ENCODE measurements at regions of chr10 and their contacts with region 1.

Region 1: DNA sequence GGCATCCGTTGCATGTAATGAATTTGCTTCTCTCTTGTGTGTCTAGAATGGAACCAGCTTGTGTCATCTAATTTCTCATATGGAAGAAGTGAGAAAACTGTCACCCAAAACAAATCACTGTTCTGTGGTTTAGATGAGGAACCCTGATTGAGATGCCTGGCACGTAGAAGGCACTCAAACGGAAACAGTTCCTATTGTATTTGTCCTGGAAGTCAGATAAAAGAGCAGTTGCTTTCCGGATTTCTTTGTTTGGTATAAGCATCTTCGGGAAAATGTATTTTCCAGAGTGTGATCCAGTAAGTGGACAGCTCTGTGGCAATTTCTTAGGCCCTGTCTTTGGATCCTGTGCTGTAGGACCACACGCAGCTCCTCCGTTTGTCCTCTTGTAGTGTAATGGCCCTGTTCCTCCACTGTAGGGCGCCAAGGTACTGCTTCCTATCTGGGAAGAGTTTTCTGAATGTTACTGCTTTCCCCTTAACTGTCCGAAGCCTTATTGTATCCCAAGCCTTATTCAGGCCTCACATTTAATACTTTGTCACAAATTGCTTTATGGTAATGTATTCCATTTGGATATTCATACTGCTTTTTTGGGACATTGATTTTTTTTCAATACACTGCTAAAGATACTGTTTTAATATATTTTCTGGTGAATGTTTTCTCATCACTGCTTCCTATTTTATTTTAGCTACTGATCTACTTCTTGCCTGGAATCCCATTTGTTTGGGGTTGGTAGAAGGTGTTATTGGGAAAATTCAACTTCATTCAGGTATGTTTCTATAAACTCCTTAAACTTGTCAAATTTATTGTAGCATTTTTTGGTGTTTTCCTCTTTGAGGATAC is 24.8 kb downstream of the INPP5F start:
- DNase-seq: peak; percentile 81
- ATAC-seq: peak; percentile 97
- H3K4me3 ChIP-seq: peak overlapping the region in 1 of 5 experiments; percentile 25
- H3K4me3 Mint-ChIP-seq: peak overlapping the region; percentile 77
- H3K27ac ChIP-seq: peak overlapping the region; percentile 32 to 59
- H3K27ac Mint-ChIP-seq: peak overlapping the region; percentile 83
- H3K4me1 ChIP-seq: peaks cover 9 to 16% of the 10 kb centered on the region in 2 donors
- H3K4me1 Mint-ChIP-seq: peaks cover 29% of the 10 kb centered on the region
- H3K27me3 ChIP-seq: no peaks in the 10 kb centered on the region
- H3K27me3 Mint-ChIP-seq: no peaks in the 10 kb centered on the region
- CTCF ChIP-seq: peak; percentile 93

Region 2: GRCh38 chr10:119693262-119693957 is 57.2 kb before region 1 on chr10:
- CTCF ChIA-PET with region 1: interaction called, 98 read pairs
- POLR2A ChIA-PET with region 1: no interaction called
- intact Hi-C with region 1: no loop called
- DNase-seq: no peak
- ATAC-seq: peak; percentile 28
- H3K4me3 ChIP-seq: no peak overlapping the region
- H3K4me3 Mint-ChIP-seq: no peak overlapping the region
- H3K27ac ChIP-seq: no peak overlapping the region
- H3K27ac Mint-ChIP-seq: peak overlapping the region; percentile 2
- H3K4me1 ChIP-seq: peaks cover 17 to 23% of the 10 kb centered on the region in 2 donors
- H3K4me1 Mint-ChIP-seq: peaks cover 40% of the 10 kb centered on the region
- H3K27me3 ChIP-seq: no peaks in the 10 kb centered on the region
- H3K27me3 Mint-ChIP-seq: no peaks in the 10 kb centered on the region
- CTCF ChIP-seq: no peak

Region 3: GRCh38 chr10:119725828-119726675 is 24.6 kb before region 1 on chr10 and contains the start of gene INPP5F:
- CTCF ChIA-PET with region 1: interaction called, 39 read pairs
- POLR2A ChIA-PET with region 1: interaction called, 4 read pairs
- intact Hi-C with region 1: loop called (anchors 2 kb)
- DNase-seq: peak; percentile 95
- ATAC-seq: peak; percentile 93
- H3K4me3 ChIP-seq: peak within 1 kb of the TSS; percentile 55 to 85 (median 70)
- H3K4me3 Mint-ChIP-seq: peak within 1 kb of the TSS; percentile 98
- H3K27ac ChIP-seq: peak within 1 kb of the TSS; percentile 73 to 90
- H3K27ac Mint-ChIP-seq: peak within 1 kb of the TSS; percentile 95
- H3K4me1 ChIP-seq: peaks cover 38 to 51% of the 10 kb centered on the region in 2 donors
- H3K4me1 Mint-ChIP-seq: peaks cover 48% of the 10 kb centered on the region
- H3K27me3 ChIP-seq: no peaks in the 10 kb centered on the region
- H3K27me3 Mint-ChIP-seq: no peaks in the 10 kb centered on the region
- CTCF ChIP-seq: peak; percentile 55
- total RNA-seq, gene INPP5F: 37.5 and 42.5 TPM in 2 replicates

Region 4: DNA sequence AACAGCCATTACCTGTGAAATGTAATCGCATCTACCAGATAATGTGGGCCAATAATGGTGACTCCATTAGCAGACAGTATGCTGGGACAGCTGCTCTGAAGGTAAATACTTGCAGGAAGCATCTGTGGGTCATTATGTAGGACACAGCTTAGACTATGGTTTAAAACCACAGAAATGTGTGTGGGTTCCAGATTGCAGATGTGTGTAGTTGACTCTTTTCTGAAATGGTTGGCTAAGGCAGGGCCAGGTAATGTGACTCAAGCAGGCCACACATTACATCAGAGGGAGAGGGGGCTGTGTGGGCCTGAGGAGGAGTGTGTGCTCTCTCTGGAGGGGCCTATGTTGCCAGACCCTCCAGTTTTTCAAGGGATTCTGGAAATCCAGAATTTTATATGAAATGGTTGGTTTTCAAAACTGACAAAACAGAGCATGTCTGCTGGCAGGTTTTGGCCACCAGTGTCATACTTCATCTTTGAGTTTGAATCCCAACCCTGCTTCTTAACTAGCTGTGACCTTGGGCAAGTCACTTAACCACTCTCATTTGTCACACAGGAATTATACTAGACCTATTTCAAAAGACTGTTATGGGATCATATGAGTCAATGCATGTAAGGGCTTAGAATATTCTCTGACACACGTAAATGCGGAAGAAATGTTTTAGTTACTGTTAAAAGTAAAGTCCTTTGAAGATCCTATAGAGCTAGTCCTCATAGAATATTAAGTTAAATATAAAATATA is 57.5 kb after region 1 on chr10:
- CTCF ChIA-PET with region 1: interaction called, 9 read pairs
- POLR2A ChIA-PET with region 1: no interaction called
- intact Hi-C with region 1: loop called (anchors 10 kb)
- DNase-seq: peak; percentile 17
- ATAC-seq: peak; percentile 43
- H3K4me3 ChIP-seq: no peak overlapping the region
- H3K4me3 Mint-ChIP-seq: no peak overlapping the region
- H3K27ac ChIP-seq: no peak overlapping the region
- H3K27ac Mint-ChIP-seq: no peak overlapping the region
- H3K4me1 ChIP-seq: peaks cover 3 to 9% of the 10 kb centered on the region in 2 donors
- H3K4me1 Mint-ChIP-seq: peaks cover 18% of the 10 kb centered on the region
- H3K27me3 ChIP-seq: no peaks in the 10 kb centered on the region
- H3K27me3 Mint-ChIP-seq: no peaks in the 10 kb centered on the region
- CTCF ChIP-seq: no peak

Region 5: DNA sequence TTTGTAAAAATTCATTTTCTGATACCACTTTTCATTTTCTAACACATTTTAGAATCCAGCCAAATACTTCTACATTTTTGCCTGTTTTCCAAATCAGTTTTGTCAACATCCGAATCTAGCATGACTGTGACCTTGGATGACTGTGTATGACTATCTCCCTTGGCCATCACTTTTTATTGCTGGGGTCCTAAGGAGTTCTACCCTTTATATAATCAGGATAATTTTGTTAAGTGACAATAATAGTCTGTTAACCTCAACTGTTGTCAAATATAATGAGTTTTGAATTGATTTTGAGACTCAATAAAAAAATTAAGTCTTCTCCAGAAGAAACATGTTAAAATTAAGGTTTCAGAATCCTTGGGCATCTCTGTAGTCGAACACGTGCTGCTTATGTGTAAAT is 195.2 kb after region 1 on chr10:
- CTCF ChIA-PET with region 1: no interaction called
- POLR2A ChIA-PET with region 1: no interaction called
- intact Hi-C with region 1: loop called (anchors 1 kb)
- DNase-seq: no peak
- ATAC-seq: no peak
- H3K4me3 ChIP-seq: no peak overlapping the region
- H3K4me3 Mint-ChIP-seq: no peak overlapping the region
- H3K27ac ChIP-seq: no peak overlapping the region
- H3K27ac Mint-ChIP-seq: no peak overlapping the region
- H3K4me1 ChIP-seq: no peaks in the 10 kb centered on the region
- H3K4me1 Mint-ChIP-seq: no peaks in the 10 kb centered on the region
- H3K27me3 ChIP-seq: no peaks in the 10 kb centered on the region
- H3K27me3 Mint-ChIP-seq: no peaks in the 10 kb centered on the region
- CTCF ChIP-seq: no peak

Region 6: DNA sequence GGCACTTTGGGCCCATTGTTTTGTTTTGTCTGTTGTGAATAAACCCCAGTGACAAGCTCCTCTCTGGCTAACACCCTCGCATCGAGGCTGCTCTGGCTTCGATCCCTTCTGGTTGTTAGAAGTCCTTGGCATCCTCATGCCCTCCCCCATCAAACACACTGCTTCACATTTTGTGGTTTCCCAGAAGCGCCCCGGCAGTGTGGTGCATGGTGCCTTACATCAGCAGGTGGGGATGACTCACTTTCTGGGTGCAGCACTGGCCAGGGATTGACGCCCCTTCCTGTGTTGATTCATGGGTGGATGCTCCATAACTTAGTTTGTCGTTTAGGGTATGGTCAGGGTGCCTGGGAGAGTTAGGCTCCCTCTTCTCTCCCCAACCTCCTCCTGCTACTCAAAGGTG is 757.8 kb after region 1 on chr10:
- CTCF ChIA-PET with region 1: no interaction called
- POLR2A ChIA-PET with region 1: no interaction called
- intact Hi-C with region 1: no loop called
- DNase-seq: no peak
- ATAC-seq: no peak
- H3K4me3 ChIP-seq: no peak overlapping the region
- H3K4me3 Mint-ChIP-seq: no peak overlapping the region
- H3K27ac ChIP-seq: no peak overlapping the region
- H3K27ac Mint-ChIP-seq: no peak overlapping the region
- H3K4me1 ChIP-seq: no peaks in the 10 kb centered on the region
- H3K4me1 Mint-ChIP-seq: no peaks in the 10 kb centered on the region
- H3K27me3 ChIP-seq: no peaks in the 10 kb centered on the region
- H3K27me3 Mint-ChIP-seq: no peaks in the 10 kb centered on the region
- CTCF ChIP-seq: no peak

Measured in B cell (primary cell).